RWPE1 (cell line): ENCODE measurements at regions of chr14 and their contacts with region 1.

Region 1: GRCh38 chr14:23478111-23478759 is 8.7 kb downstream of the NGDN start:
- DNase-seq: peak; percentile 45
- H3K27ac ChIP-seq: no peak overlapping the region
- CTCF ChIP-seq: peak; percentile 66

Region 2: DNA sequence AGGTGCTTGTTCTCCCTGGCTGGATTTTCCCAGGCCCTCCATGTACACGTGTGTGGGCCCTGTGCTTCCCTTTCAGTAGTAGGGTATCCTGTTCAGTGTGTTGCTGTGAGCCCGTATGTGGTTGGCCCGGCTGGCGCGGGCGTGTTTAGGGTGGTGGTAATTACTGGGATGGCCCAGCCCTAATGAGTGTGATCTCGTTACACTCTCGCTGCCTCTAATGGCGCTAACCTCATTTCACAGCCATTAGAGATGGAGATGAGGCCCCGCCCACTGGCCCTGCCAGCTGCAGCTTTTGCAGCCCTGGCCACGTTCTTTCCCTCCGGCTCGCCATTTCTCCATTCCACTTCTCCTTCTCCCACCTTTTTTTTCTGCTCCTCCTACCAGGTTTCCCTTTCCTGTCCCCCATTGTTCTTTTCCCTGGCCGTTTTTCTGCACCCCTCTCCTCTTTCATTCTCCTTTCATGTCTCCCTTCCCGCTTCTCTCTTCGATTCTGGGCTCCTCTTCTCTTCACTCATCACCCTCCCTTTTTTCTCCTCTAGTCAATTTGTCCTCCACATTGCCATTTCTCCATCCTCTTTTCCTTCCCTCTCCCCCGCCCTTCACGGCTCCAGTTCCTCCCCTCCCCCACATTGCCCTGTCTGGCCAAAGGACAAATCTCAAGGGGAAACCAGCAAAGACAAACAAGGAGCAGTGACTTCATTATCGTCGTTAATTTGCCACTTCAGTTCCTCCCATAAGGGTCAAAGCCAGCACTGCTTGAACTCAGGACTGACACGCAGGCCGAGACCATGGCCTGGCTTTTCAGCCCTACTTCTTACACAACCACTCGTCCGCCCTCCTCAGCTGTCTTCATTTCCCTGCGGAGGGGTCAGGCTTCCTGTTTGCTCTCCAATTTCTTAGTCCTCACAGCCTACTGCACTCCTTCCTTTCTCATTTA is 66.5 kb after region 1 on chr14:
- CTCF ChIA-PET with region 1: no interaction called
- POLR2A ChIA-PET with region 1: no interaction called
- DNase-seq: no peak
- H3K27ac ChIP-seq: no peak overlapping the region
- CTCF ChIP-seq: no peak

Region 3: GRCh38 chr14:23559010-23559925 is 81.0 kb after region 1 on chr14:
- CTCF ChIA-PET with region 1: interaction called, 24 read pairs
- POLR2A ChIA-PET with region 1: interaction called, 5 read pairs
- DNase-seq: peak; percentile 60
- H3K27ac ChIP-seq: peak overlapping the region; percentile 33
- CTCF ChIP-seq: peak; percentile 93